Caco-2 (cell line): ENCODE measurements at regions of chr12 and their contacts with region 1.

Region 1: GRCh38 chr12:84874125-84874824 is 38.3 kb downstream of the SLC6A15 start:
- DNase-seq: peak in 1 of 2 experiments; percentile 36
- H3K4me3 ChIP-seq: no peak overlapping the region
- H3K4me3 Mint-ChIP-seq: no peak overlapping the region
- H3K27ac Mint-ChIP-seq: no peak overlapping the region
- H3K4me1 ChIP-seq: no peaks in the 10 kb centered on the region
- H3K4me1 Mint-ChIP-seq: no peaks in the 10 kb centered on the region
- H3K27me3 ChIP-seq: no peaks in the 10 kb centered on the region
- H3K27me3 Mint-ChIP-seq: peaks cover 5% of the 10 kb centered on the region
- CTCF ChIP-seq: peak; percentile 57 to 60

Region 2: GRCh38 chr12:84891106-84891838 is 17.0 kb after region 1 on chr12:
- CTCF ChIA-PET with region 1: no interaction called
- POLR2A ChIA-PET with region 1: no interaction called
- intact Hi-C with region 1: no loop called
- DNase-seq: no peak
- H3K4me3 ChIP-seq: no peak overlapping the region
- H3K4me3 Mint-ChIP-seq: no peak overlapping the region
- H3K27ac Mint-ChIP-seq: no peak overlapping the region
- H3K4me1 ChIP-seq: no peaks in the 10 kb centered on the region
- H3K4me1 Mint-ChIP-seq: no peaks in the 10 kb centered on the region
- H3K27me3 ChIP-seq: no peaks in the 10 kb centered on the region
- H3K27me3 Mint-ChIP-seq: peaks cover 4% of the 10 kb centered on the region
- CTCF ChIP-seq: no peak

Region 3: GRCh38 chr12:85029456-85029855 is 155.2 kb after region 1 on chr12:
- CTCF ChIA-PET with region 1: interaction called, 9 read pairs
- POLR2A ChIA-PET with region 1: no interaction called
- intact Hi-C with region 1: loop called (anchors 1 kb)
- DNase-seq: peak in 1 of 2 experiments; percentile 4
- H3K4me3 ChIP-seq: no peak overlapping the region
- H3K4me3 Mint-ChIP-seq: no peak overlapping the region
- H3K27ac Mint-ChIP-seq: no peak overlapping the region
- H3K4me1 ChIP-seq: no peaks in the 10 kb centered on the region
- H3K4me1 Mint-ChIP-seq: no peaks in the 10 kb centered on the region
- H3K27me3 ChIP-seq: no peaks in the 10 kb centered on the region
- H3K27me3 Mint-ChIP-seq: peaks cover 3% of the 10 kb centered on the region
- CTCF ChIP-seq: peak in 1 of 2 experiments; percentile 60

Region 4: GRCh38 chr12:85057370-85057963 is 183.2 kb after region 1 on chr12:
- CTCF ChIA-PET with region 1: no interaction called
- POLR2A ChIA-PET with region 1: no interaction called
- intact Hi-C with region 1: loop called (anchors 1 kb)
- DNase-seq: peak; percentile 39 to 67
- H3K4me3 ChIP-seq: no peak overlapping the region
- H3K4me3 Mint-ChIP-seq: no peak overlapping the region
- H3K27ac Mint-ChIP-seq: no peak overlapping the region
- H3K4me1 ChIP-seq: no peaks in the 10 kb centered on the region
- H3K4me1 Mint-ChIP-seq: no peaks in the 10 kb centered on the region
- H3K27me3 ChIP-seq: no peaks in the 10 kb centered on the region
- H3K27me3 Mint-ChIP-seq: peaks cover 8% of the 10 kb centered on the region
- CTCF ChIP-seq: peak; percentile 58 to 75